CD8-positive, alpha-beta memory T cell (primary cell): ENCODE measurements at regions of chr15 and their contacts with region 1.

Region 1: GRCh38 chr15:52179278-52180195 is 11.7 kb downstream of the GNB5 start:
- DNase-seq: peak; percentile 78 to 92 (median 88)
- H3K4me3 ChIP-seq: peak overlapping the region; percentile 66
- H3K4me3 Mint-ChIP-seq: peak overlapping the region; percentile 91 to 98 (median 92)
- H3K27ac ChIP-seq: peak overlapping the region; percentile 99
- H3K27ac Mint-ChIP-seq: peak overlapping the region; percentile 91 to 100 (median 98)
- H3K4me1 ChIP-seq: peaks cover 20% of the 10 kb centered on the region
- H3K4me1 Mint-ChIP-seq: peaks cover 33 to 54% (median 43%) of the 10 kb centered on the region in 3 donors
- H3K27me3 ChIP-seq: no peaks in the 10 kb centered on the region
- H3K27me3 Mint-ChIP-seq: no peaks in the 10 kb centered on the region

Region 2: DNA sequence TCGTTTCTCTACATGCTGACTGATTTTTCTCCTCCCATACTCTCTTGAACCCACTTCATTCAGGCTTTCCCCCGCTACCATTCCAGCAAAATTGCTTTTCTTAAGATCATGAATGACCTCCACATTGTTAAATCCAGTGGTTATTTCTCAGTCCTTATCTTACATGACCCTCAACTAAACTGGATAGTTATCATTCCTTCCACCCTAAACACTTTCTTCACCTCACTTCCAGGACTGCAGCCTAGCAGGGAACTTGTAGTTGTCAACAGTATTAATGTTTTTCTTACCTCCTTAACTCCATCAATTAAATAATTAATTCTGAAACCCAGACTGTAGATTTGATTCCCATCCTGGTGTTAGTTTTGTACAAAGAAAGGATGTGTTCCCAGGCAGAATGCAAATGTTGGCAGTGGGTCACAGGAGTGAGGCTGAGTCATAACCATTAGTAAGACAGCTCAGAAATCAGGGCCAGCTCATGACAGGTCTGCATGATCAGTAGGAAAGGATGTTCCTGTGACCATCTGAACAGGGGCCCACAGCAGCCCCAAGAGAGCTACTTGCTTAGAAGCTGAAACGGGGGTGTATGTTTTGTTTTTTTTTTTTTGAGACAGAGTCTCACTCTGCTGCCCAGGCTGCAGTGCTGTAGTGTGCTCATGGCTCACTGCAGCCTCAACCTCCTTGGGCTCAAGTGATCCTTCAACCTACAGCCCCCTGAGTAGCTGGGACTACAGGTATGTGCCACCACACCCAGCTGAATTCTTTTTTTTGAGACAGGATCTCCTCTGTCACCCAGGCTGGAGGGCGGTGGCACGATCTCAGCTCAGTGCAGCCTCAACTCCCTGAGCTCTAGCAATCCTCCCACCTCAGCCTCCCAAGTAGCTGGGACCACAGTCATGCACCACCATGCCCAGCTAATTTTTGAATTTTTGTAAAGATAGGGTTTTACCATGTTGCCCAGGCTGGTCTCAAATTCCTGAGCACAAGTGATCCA is 76.0 kb before region 1 on chr15:
- CTCF ChIA-PET with region 1: no interaction called
- POLR2A ChIA-PET with region 1: no interaction called
- DNase-seq: no peak
- H3K4me3 ChIP-seq: no peak overlapping the region
- H3K4me3 Mint-ChIP-seq: no peak overlapping the region
- H3K27ac ChIP-seq: no peak overlapping the region
- H3K27ac Mint-ChIP-seq: peak overlapping the region in 1 of 8 donors; percentile 19
- H3K4me1 ChIP-seq: no peaks in the 10 kb centered on the region
- H3K4me1 Mint-ChIP-seq: no peaks in the 10 kb centered on the region
- H3K27me3 ChIP-seq: peaks cover 7% of the 10 kb centered on the region
- H3K27me3 Mint-ChIP-seq: peaks cover 7 to 33% of the 10 kb centered on the region in 2 donors

Region 3: DNA sequence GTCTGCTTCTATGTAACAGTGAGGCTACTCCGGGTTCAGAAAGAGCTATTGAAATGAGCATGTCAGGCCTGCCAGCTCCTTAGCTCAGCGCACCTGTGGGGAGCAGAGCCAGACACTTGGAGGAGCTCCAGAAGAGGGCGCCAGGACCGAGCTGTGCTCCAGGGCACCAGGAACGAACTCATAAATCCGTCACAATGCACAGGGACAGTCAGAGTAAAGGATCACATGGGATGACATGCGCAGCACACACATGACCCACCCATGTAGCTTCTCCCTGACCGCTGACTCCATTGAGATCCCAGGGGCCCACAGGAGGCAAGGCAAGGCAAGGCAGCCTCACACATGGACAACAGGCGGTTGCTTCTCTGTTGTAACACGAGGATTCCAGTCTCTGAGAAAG is 37.6 kb after region 1 on chr15:
- CTCF ChIA-PET with region 1: interaction called, 13 read pairs
- POLR2A ChIA-PET with region 1: interaction called, 24 read pairs
- DNase-seq: no peak
- H3K4me3 ChIP-seq: no peak overlapping the region
- H3K4me3 Mint-ChIP-seq: no peak overlapping the region
- H3K27ac ChIP-seq: no peak overlapping the region
- H3K27ac Mint-ChIP-seq: peak overlapping the region in 1 of 8 donors; percentile 86
- H3K4me1 ChIP-seq: peaks cover 20% of the 10 kb centered on the region
- H3K4me1 Mint-ChIP-seq: peaks cover 15 to 24% (median 16%) of the 10 kb centered on the region in 3 donors
- H3K27me3 ChIP-seq: no peaks in the 10 kb centered on the region
- H3K27me3 Mint-ChIP-seq: no peaks in the 10 kb centered on the region

Region 4: GRCh38 chr15:52243697-52244555 is 64.4 kb after region 1 on chr15:
- CTCF ChIA-PET with region 1: no interaction called
- POLR2A ChIA-PET with region 1: no interaction called
- DNase-seq: no peak
- H3K4me3 ChIP-seq: no peak overlapping the region
- H3K4me3 Mint-ChIP-seq: no peak overlapping the region
- H3K27ac ChIP-seq: no peak overlapping the region
- H3K27ac Mint-ChIP-seq: no peak overlapping the region
- H3K4me1 ChIP-seq: peaks cover 11% of the 10 kb centered on the region
- H3K4me1 Mint-ChIP-seq: peaks cover 6 to 11% (median 9%) of the 10 kb centered on the region in 3 donors
- H3K27me3 ChIP-seq: no peaks in the 10 kb centered on the region
- H3K27me3 Mint-ChIP-seq: peaks cover 0 to 4% of the 10 kb centered on the region in 2 donors